Mucosa of descending colon (tissue), 3 donors: ENCODE measurements at regions of chr9 and their contacts with region 1.

Region 1: DNA sequence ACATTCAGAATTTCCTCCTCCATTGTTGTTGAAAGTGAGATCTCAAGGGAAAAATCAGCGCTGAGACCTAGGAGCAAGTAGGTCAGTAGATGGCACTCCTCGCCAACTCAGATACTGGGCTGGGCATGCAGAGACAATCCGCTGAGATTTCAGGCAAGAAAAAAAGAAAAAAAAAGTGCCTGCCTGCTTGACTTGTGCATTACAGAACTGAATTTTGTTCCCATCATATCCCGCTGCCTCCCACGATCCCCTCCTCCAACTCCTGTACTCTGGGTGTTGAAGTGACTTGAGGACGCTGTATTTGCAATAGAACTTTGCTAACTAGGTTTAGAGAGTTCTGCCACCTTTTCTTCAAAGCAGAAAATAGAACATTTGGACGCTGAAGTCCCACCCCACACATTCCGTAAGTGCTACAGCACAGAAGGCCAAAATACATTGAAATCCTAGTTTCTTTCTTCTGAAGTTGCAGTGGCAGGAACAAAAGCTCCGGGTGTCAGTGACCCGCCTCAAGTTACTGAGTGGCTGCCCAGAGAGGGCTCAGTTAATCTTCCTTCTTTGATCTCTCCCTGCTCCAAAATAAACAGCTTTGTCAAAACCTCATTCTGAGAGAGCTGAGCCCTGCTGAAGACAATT is 265.8 kb downstream of the MLLT3 start:
- DNase-seq: peak; percentile 53 to 84 (median 67)
- ATAC-seq: peak; percentile 89
- H3K4me3 ChIP-seq: no peak overlapping the region
- H3K4me1 ChIP-seq: peaks cover 10% of the 10 kb centered on the region
- CTCF ChIP-seq: peak; percentile 39

Region 2: GRCh38 chr9:20622330-20623020 is 266.0 kb after region 1 on chr9 and contains the start of gene MLLT3:
- intact Hi-C with region 1: loop called (anchors 10 kb)
- DNase-seq: peak; percentile 97 to 98 (median 98)
- ATAC-seq: peak; percentile 90
- H3K4me3 ChIP-seq: peak within 1 kb of the TSS; percentile 73
- H3K4me1 ChIP-seq: peaks cover 14% of the 10 kb centered on the region
- CTCF ChIP-seq: no peak
- total RNA-seq, gene MLLT3: 35.1 to 53.7 (median 46.5) TPM

Region 3: DNA sequence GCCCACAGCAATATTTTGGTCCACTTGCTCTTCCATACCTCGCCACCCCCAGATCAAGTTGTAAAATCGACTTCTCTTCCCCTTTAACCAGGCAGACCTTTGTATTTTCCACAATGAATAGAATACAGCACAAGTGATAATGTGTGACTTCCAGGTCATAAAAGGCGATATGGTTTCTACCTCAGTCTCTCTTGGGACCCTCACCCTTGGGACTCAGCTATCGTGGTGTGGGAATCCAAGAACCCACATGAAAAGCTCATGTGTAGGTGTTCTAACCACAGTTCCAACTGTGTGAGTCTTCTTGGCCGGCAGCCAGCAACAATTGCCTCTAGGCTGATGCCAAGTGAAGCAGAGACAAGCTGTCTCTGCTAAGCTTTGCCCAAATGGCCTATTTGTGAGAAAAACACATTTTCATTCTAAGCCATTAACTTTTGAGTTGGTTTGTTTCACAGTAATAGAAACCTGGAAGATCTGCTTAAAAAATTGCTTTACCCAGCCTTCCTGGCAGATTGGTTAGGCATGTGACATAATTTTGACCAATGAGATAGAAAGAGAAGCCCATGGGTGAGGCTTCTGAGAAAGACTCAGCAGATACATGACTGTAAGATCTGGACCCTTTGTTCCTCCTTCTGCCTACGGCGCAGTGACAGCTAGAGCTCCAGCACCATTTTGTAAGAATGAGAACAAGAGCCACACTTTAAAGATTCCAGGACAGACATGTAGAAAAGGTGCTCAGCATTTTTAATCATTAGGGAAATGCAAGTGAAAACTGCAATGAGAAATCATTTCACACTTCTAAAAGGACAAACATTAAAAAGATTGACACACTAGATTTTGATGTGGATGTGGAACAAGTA is 284.0 kb after region 1 on chr9:
- intact Hi-C with region 1: no loop called
- DNase-seq: peak; percentile 72 to 86 (median 77)
- ATAC-seq: peak; percentile 61
- H3K4me3 ChIP-seq: no peak overlapping the region
- H3K4me1 ChIP-seq: no peaks in the 10 kb centered on the region
- CTCF ChIP-seq: no peak